A549 (cell line): ENCODE measurements at regions of chr10 and their contacts with region 1.

Region 1: GRCh38 chr10:100346765-100347567 is at the start of gene SCD:
- DNase-seq: peak; percentile 93 to 98
- ATAC-seq: peak; percentile 91 to 93
- H3K4me3 ChIP-seq: peak within 1 kb of the TSS; percentile 99
- H3K27ac ChIP-seq: peak within 1 kb of the TSS; percentile 99
- H3K4me1 ChIP-seq: peaks cover 60% of the 10 kb centered on the region
- CTCF ChIP-seq: no peak
- EP300 ChIP-seq: peak in 1 of 2 experiments; percentile 18; a peak in 1 of 5 replicates
- POLR2A ChIP-seq: peak; percentile 71
- RAD21 ChIP-seq: 0 out of 5 replicates have a peak, but pooled peaks have one; percentile 1 to 8
- polyA plus RNA-seq, gene SCD: 329 and 348 TPM in 2 replicates

Region 2: DNA sequence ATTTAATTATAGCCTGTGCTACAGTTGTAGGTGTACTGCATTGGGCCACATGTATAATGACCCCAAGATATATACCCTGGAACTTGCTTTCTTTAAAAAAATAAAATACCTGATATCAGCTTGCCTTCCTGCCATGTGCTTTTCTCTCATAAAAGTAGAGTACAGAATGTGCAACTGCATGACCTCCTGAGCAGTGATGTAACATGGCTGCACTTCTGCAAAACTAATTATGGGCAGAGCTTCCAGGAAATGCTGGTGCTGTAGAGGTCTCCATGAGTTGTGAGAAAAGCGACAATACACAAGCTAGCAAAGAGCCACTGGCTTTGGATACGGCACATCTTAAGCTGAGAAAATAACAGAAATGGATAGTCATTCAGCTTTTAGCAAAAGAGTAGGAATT is 154.6 kb before region 1 on chr10:
- CTCF ChIA-PET with region 1: no interaction called
- POLR2A ChIA-PET with region 1: no interaction called
- DNase-seq: no peak
- ATAC-seq: no peak
- H3K4me3 ChIP-seq: no peak overlapping the region
- H3K27ac ChIP-seq: no peak overlapping the region
- H3K4me1 ChIP-seq: peaks cover 12% of the 10 kb centered on the region; the same call in 2 of the 3 replicates
- CTCF ChIP-seq: no peak
- EP300 ChIP-seq: no peak
- POLR2A ChIP-seq: no peak
- RAD21 ChIP-seq: no peak

Region 3: DNA sequence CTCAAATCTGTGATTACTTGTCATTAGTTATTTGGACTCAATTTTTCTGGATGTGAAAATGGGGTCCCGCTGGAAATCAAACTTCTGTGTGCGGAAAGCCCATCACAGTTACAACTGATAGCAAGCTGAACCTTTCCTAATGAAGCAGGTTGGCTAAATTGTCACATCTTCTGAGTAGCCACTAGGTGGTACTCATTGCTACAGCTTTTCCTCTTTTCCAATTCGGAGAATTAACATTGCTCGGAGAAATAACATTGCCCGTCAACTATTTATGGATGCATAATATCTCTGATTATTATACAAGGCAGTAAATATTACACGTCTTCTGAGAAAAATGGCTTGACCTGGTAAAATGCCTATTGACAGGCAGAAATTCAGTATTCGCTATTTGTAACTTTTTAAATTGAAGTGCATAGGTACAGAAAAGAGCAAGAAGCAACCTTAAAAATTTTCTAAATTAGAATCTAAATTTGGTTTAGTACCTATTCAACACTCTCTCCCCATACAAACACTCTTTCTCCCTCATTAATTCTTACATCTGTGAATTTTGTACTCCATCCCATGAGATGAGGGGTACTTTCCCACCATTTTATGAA is 43.1 kb before region 1 on chr10:
- CTCF ChIA-PET with region 1: interaction called, 12 read pairs
- POLR2A ChIA-PET with region 1: no interaction called
- DNase-seq: peak; percentile 55 to 69
- ATAC-seq: peak; percentile 63 to 85; a peak in 3 of 6 replicates
- H3K4me3 ChIP-seq: no peak overlapping the region
- H3K27ac ChIP-seq: no peak overlapping the region
- H3K4me1 ChIP-seq: peaks cover 32% of the 10 kb centered on the region
- CTCF ChIP-seq: peak; percentile 80
- EP300 ChIP-seq: no peak
- POLR2A ChIP-seq: no peak
- RAD21 ChIP-seq: peak; percentile 79

Region 4: GRCh38 chr10:100359529-100360150 is 12.7 kb after region 1 on chr10:
- CTCF ChIA-PET with region 1: interaction called, 86 read pairs
- POLR2A ChIA-PET with region 1: interaction called, 23 read pairs
- DNase-seq: no peak
- ATAC-seq: peak in 1 of 2 experiments; percentile 6; a peak in 2 of 6 replicates
- H3K4me3 ChIP-seq: no peak overlapping the region
- H3K27ac ChIP-seq: peak overlapping the region; percentile 13 to 58; a peak in 4 of 6 replicates
- H3K4me1 ChIP-seq: peaks cover 99% of the 10 kb centered on the region
- CTCF ChIP-seq: no peak
- EP300 ChIP-seq: no peak
- POLR2A ChIP-seq: no peak
- RAD21 ChIP-seq: no peak

Region 5: GRCh38 chr10:100364735-100365391 is 17.9 kb after region 1 on chr10:
- CTCF ChIA-PET with region 1: interaction called, 27 read pairs
- POLR2A ChIA-PET with region 1: interaction called, 47 read pairs
- DNase-seq: peak; percentile 89 to 95
- ATAC-seq: peak; percentile 90 to 94
- H3K4me3 ChIP-seq: no peak overlapping the region
- H3K27ac ChIP-seq: peak overlapping the region; percentile 77 to 90
- H3K4me1 ChIP-seq: peaks cover 71% of the 10 kb centered on the region
- CTCF ChIP-seq: no peak
- EP300 ChIP-seq: no peak; a peak in 1 of 5 replicates
- POLR2A ChIP-seq: no peak
- RAD21 ChIP-seq: peak in 1 of 2 experiments; percentile 30; a peak in 1 of 5 replicates

Region 6: GRCh38 chr10:100373298-100374136 is 26.6 kb after region 1 on chr10:
- CTCF ChIA-PET with region 1: interaction called, 15 read pairs
- POLR2A ChIA-PET with region 1: interaction called, 143 read pairs
- DNase-seq: peak; percentile 99 to 100
- ATAC-seq: peak; percentile 88 to 92
- H3K4me3 ChIP-seq: peak overlapping the region; percentile 43
- H3K27ac ChIP-seq: peak overlapping the region; percentile 97 to 98
- H3K4me1 ChIP-seq: peaks cover 61% of the 10 kb centered on the region
- CTCF ChIP-seq: no peak
- EP300 ChIP-seq: peak in 1 of 2 experiments; percentile 30; a peak in 1 of 5 replicates
- POLR2A ChIP-seq: peak; percentile 45
- RAD21 ChIP-seq: peak in 1 of 2 experiments; percentile 53; a peak in 2 of 5 replicates